SK-N-SH (cell line): ENCODE measurements at regions of chr5 and their contacts with region 1.

Region 1: DNA sequence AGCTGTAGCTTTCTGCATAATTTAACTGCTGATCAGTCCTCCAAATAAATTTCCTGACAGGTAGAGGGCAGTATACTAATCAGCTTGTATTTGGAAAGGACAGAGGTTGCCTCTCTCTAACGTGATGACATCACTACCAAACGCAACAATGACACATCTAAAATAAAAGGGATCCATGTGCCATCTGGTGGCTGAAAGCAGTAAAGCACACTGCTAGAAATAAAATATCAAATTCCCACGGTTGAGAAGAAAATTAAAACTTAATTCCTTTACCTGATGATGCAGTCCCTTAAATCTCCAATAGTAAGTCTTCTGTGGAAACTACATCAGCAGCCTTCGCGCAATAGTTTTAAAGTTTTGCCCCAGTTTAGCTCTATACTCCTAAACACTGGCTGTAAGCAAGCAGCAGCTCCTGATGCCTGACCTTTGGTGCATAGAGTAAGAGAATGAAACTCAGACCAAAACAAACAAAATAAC is 54.5 kb downstream of the DIAPH1 start:
- DNase-seq: peak; percentile 59
- H3K4me3 ChIP-seq: peak overlapping the region in 1 of 2 experiments; percentile 31; a peak in 1 of 4 replicates
- H3K27ac ChIP-seq: peak overlapping the region; percentile 77 to 82
- H3K4me1 ChIP-seq: peaks cover 11 to 15% of the 10 kb centered on the region in 2 experiments; a peak in 3 of 4 replicates
- H3K27me3 ChIP-seq: no peaks in the 10 kb centered on the region
- CTCF ChIP-seq: peak; percentile 99
- EP300 ChIP-seq: peak in 1 of 2 experiments; percentile 43; a peak in 2 of 4 replicates
- RAD21 ChIP-seq: peak; percentile 83

Region 2: GRCh38 chr5:141121563-141121962 is 442.7 kb before region 1 on chr5 and contains the start of gene PCDHB4:
- CTCF ChIA-PET with region 1: interaction called, 15 read pairs
- POLR2A ChIA-PET with region 1: no interaction called
- DNase-seq: peak; percentile 49
- H3K4me3 ChIP-seq: peak within 1 kb of the TSS; percentile 38 to 41
- H3K27ac ChIP-seq: no peak within 1 kb of the TSS; a peak in 1 of 4 replicates
- H3K4me1 ChIP-seq: peaks cover 0 to 2% of the 10 kb centered on the region in 2 experiments; a peak in 1 of 4 replicates
- H3K27me3 ChIP-seq: no peaks in the 10 kb centered on the region
- CTCF ChIP-seq: peak; percentile 51
- EP300 ChIP-seq: no peak
- RAD21 ChIP-seq: peak; percentile 70
- polyA plus RNA-seq, gene PCDHB4: 0.36 and 0.51 TPM in 2 replicates

Region 3: DNA sequence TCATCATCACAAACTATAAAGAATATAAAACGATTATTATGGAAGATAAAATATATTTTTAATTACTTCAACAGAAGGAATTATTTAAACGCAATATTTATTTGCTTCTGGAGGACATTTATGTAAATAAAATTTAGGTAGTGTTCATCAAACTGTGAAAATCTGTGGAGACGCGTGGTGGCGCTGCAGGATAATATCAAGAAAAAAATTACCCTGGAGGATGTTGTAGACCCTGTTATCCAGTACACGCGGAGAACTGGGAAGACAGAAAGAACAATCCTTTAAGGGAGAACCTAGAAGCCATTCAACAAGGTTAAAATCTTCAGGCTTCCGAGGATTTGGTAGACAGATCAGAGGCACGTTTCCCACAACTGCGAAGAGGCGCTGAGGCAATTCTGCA is 355.8 kb before region 1 on chr5 and contains the start of gene PCDHB12:
- CTCF ChIA-PET with region 1: interaction called, 13 read pairs
- POLR2A ChIA-PET with region 1: no interaction called
- DNase-seq: peak; percentile 50
- H3K4me3 ChIP-seq: peak within 1 kb of the TSS; percentile 44 to 46
- H3K27ac ChIP-seq: no peak within 1 kb of the TSS; a peak in 1 of 4 replicates
- H3K4me1 ChIP-seq: no peaks in the 10 kb centered on the region
- H3K27me3 ChIP-seq: no peaks in the 10 kb centered on the region
- CTCF ChIP-seq: peak; percentile 56
- EP300 ChIP-seq: no peak
- RAD21 ChIP-seq: peak; percentile 55
- polyA plus RNA-seq, gene PCDHB12: 1.9 and 2.0 TPM in 2 replicates

Region 4: GRCh38 chr5:141320225-141321169 is 243.8 kb before region 1 on chr5 and contains the start of gene TAF7:
- CTCF ChIA-PET with region 1: interaction called, 36 read pairs
- POLR2A ChIA-PET with region 1: interaction called, 16 read pairs
- DNase-seq: peak; percentile 94
- H3K4me3 ChIP-seq: peak within 1 kb of the TSS; percentile 80 to 92
- H3K27ac ChIP-seq: peak within 1 kb of the TSS; percentile 96 to 98
- H3K4me1 ChIP-seq: no peaks in the 10 kb centered on the region; a peak in 1 of 4 replicates
- H3K27me3 ChIP-seq: no peaks in the 10 kb centered on the region
- CTCF ChIP-seq: peak; percentile 90
- EP300 ChIP-seq: 0 out of 4 replicates have a peak, but pooled peaks of 1 of the 2 experiments have one; percentile 31
- RAD21 ChIP-seq: peak; percentile 60
- polyA plus RNA-seq, gene TAF7: 30.6 and 38.7 TPM in 2 replicates

Region 5: GRCh38 chr5:141412854-141413539 is 151.3 kb before region 1 on chr5 and contains the start of gene PCDHGA10:
- CTCF ChIA-PET with region 1: interaction called, 44 read pairs
- POLR2A ChIA-PET with region 1: interaction called, 3 read pairs
- DNase-seq: no peak
- H3K4me3 ChIP-seq: peak within 1 kb of the TSS; percentile 22 to 28; a peak in 3 of 4 replicates
- H3K27ac ChIP-seq: no peak within 1 kb of the TSS
- H3K4me1 ChIP-seq: no peaks in the 10 kb centered on the region
- H3K27me3 ChIP-seq: no peaks in the 10 kb centered on the region
- CTCF ChIP-seq: peak; percentile 54
- EP300 ChIP-seq: no peak
- RAD21 ChIP-seq: peak; percentile 47
- polyA plus RNA-seq, gene PCDHGA10: 1.6 and 2.0 TPM in 2 replicates

Region 6: DNA sequence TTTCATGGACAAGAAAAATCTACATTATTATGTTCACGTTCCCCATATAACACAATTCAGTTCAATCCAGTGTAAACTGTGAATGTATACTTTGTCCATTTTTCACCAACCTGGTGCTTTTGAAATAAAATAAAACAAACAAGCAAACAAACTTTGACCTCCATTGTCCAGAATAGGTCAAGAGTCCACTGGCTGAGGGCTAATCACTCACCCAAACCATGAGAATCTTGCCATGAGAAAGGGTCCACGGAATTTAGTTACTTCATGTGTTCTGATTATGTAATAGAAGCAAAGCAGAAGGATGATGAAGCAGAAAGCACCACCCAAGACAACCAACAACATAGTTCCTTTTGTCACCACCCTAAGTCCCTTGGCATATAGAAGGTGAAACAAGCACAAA is 25.9 kb after region 1 on chr5:
- CTCF ChIA-PET with region 1: interaction called, 11 read pairs
- POLR2A ChIA-PET with region 1: no interaction called
- DNase-seq: no peak
- H3K4me3 ChIP-seq: no peak overlapping the region
- H3K27ac ChIP-seq: no peak overlapping the region
- H3K4me1 ChIP-seq: no peaks in the 10 kb centered on the region
- H3K27me3 ChIP-seq: no peaks in the 10 kb centered on the region
- CTCF ChIP-seq: no peak
- EP300 ChIP-seq: no peak
- RAD21 ChIP-seq: no peak

Region 7: GRCh38 chr5:141657937-141658545 is 93.8 kb after region 1 on chr5:
- CTCF ChIA-PET with region 1: no interaction called
- POLR2A ChIA-PET with region 1: no interaction called
- DNase-seq: no peak
- H3K4me3 ChIP-seq: no peak overlapping the region
- H3K27ac ChIP-seq: peak overlapping the region in 1 of 2 experiments; percentile 48; a peak in 2 of 4 replicates
- H3K4me1 ChIP-seq: peaks cover 0 to 8% of the 10 kb centered on the region in 2 experiments; a peak in 2 of 4 replicates
- H3K27me3 ChIP-seq: no peaks in the 10 kb centered on the region
- CTCF ChIP-seq: no peak
- EP300 ChIP-seq: no peak
- RAD21 ChIP-seq: no peak

Region 8: DNA sequence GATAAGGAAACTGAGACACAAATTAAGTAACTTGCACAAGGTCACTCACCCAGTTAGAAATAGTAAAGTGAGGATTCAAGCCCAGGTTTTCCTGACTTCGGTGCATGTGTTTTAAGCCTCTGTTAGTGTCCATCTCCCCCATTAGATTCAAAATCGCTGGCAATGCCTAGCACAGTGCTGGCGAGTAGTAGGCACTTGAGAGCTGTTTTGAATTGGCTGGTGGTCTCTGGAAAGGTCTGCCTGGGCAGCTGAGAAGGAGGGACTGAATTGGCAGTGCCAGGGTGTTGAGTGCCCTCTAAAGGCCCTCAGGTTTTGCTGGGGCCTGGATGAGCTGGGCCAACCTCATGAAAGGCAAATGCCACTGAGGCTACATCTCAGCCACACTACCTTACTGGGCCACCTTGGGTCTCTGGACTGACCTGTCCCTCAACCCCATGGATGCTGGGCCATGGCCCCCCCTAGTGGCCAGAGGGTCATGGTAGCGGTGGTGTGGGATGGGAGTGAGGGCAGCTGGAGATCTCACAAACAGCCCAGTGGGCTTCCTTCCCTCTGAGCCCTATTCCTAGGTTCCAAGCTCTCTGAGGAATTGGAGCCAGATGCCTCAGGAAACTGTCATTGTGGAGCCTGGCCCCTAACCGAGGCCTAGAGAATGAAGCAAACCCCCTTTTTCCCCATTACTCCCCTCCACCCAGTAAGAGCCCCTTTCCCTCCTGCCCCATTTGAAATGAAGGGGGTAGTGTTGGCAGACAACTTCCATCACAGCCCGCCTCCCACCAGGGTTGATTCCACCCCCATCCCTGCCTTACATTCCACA is 249.7 kb after region 1 on chr5:
- CTCF ChIA-PET with region 1: no interaction called
- POLR2A ChIA-PET with region 1: no interaction called
- DNase-seq: peak; percentile 87
- H3K4me3 ChIP-seq: peak overlapping the region in 1 of 2 experiments; percentile 41; a peak in 1 of 4 replicates
- H3K27ac ChIP-seq: no peak overlapping the region
- H3K4me1 ChIP-seq: peaks cover 0 to 16% of the 10 kb centered on the region in 2 experiments; a peak in 1 of 4 replicates
- H3K27me3 ChIP-seq: peaks cover 6% of the 10 kb centered on the region; the same call in 1 of the 2 replicates
- CTCF ChIP-seq: peak; percentile 68
- EP300 ChIP-seq: no peak
- RAD21 ChIP-seq: peak; percentile 86